ENCODE measurements at regions of chr17 and their contacts with region 1.

Region 1: GRCh38 chr17:17681187-17681848 is at the start of gene RAI1:
- DNase-seq: peak; percentile 81 to 85 (median 83)
- H3K4me3 ChIP-seq: peak within 1 kb of the TSS; percentile 36 to 88 (median 48)
- H3K27ac ChIP-seq: peak within 1 kb of the TSS; percentile 88 to 97 (median 92)
- H3K4me1 ChIP-seq: peaks cover 21 to 36% of the 10 kb centered on the region in 2 donors
- H3K27me3 ChIP-seq: no peaks in the 10 kb centered on the region
- CTCF ChIP-seq: peak in 3 of 6 experiments; percentile 80 to 98 (median 96)
- POLR2A ChIP-seq: peak; percentile 61 to 71
- total RNA-seq, gene RAI1: 6.9 to 37.3 (median 27.1) TPM

Region 2: GRCh38 chr17:17766077-17766743 is 84.9 kb after region 1 on chr17:
- intact Hi-C with region 1: loop called in 1 of 2 experiments (anchors 10 kb)
- DNase-seq: peak in 1 of 7 donors; percentile 71
- H3K4me3 ChIP-seq: no peak overlapping the region
- H3K27ac ChIP-seq: peak overlapping the region in 2 of 5 donors; percentile 56 to 59
- H3K4me1 ChIP-seq: peaks cover 11 to 64% of the 10 kb centered on the region in 2 donors
- H3K27me3 ChIP-seq: no peaks in the 10 kb centered on the region
- CTCF ChIP-seq: no peak
- POLR2A ChIP-seq: no peak

Region 3: GRCh38 chr17:17812211-17813057 is 131.1 kb after region 1 on chr17:
- intact Hi-C with region 1: loop called in 1 of 2 experiments (anchors 5 kb)
- DNase-seq: peak; percentile 67 to 91 (median 81)
- H3K4me3 ChIP-seq: no peak overlapping the region
- H3K27ac ChIP-seq: peak overlapping the region in 4 of 5 donors; percentile 20 to 94 (median 72)
- H3K4me1 ChIP-seq: peaks cover 13 to 76% of the 10 kb centered on the region in 2 donors
- H3K27me3 ChIP-seq: no peaks in the 10 kb centered on the region
- CTCF ChIP-seq: peak; percentile 97 to 99 (median 98)
- POLR2A ChIP-seq: peak in 1 of 2 donors; percentile 18

Region 4: DNA sequence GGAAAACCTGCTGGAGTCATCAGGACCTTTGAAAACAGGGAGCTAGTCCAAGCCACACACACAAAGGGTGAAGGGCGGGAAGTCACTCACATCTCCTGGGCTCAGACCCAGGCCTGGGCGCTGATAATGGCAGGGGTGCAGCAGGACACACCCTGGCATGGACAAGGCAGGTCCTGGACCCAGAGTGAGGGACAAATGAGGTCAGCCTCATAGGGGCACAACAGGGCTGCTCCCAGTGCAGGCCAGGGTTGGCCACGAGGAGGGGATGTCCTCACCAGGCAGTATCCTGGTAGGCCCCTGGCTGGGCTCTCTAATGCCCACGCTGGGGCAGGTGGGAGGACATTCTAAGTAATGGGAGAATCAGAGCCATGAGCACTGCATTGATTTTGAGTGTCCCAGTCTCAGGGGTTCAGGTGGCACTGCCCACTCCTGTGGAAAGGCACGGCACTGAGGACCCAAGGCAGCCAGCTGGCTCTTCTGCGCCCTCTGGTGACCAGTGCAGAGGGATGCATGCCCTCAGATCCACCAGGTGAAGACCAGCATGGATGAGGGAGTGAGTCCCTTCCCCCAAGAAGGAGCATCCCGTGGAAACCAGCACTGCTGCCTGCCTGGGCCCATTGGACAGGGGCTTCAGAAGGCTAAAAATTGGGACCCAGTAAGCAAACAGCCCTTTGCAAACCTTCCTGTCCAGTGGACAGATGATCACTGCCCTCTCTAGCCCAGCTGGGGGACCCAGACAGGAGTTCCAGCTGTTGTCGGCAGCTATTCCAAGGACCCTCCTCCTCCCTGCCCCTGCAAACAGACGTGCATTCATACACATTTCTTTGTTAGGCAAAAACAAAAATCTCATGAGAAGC is 178.8 kb after region 1 on chr17:
- intact Hi-C with region 1: loop called (anchors 5 kb)
- DNase-seq: peak; percentile 58 to 86 (median 74)
- H3K4me3 ChIP-seq: no peak overlapping the region
- H3K27ac ChIP-seq: peak overlapping the region in 1 of 5 donors; percentile 13
- H3K4me1 ChIP-seq: peaks cover 17 to 35% of the 10 kb centered on the region in 2 donors
- H3K27me3 ChIP-seq: no peaks in the 10 kb centered on the region
- CTCF ChIP-seq: peak; percentile 93 to 98 (median 97)
- POLR2A ChIP-seq: no peak

Region 5: GRCh38 chr17:17868641-17869522 is 187.6 kb after region 1 on chr17:
- intact Hi-C with region 1: loop called (anchors 5 kb)
- DNase-seq: peak in 1 of 7 donors; percentile 79
- H3K4me3 ChIP-seq: no peak overlapping the region
- H3K27ac ChIP-seq: peak overlapping the region in 3 of 5 donors; percentile 32 to 77 (median 46)
- H3K4me1 ChIP-seq: peaks cover 9 to 36% of the 10 kb centered on the region in 2 donors
- H3K27me3 ChIP-seq: no peaks in the 10 kb centered on the region
- CTCF ChIP-seq: no peak
- POLR2A ChIP-seq: no peak

Region 6: DNA sequence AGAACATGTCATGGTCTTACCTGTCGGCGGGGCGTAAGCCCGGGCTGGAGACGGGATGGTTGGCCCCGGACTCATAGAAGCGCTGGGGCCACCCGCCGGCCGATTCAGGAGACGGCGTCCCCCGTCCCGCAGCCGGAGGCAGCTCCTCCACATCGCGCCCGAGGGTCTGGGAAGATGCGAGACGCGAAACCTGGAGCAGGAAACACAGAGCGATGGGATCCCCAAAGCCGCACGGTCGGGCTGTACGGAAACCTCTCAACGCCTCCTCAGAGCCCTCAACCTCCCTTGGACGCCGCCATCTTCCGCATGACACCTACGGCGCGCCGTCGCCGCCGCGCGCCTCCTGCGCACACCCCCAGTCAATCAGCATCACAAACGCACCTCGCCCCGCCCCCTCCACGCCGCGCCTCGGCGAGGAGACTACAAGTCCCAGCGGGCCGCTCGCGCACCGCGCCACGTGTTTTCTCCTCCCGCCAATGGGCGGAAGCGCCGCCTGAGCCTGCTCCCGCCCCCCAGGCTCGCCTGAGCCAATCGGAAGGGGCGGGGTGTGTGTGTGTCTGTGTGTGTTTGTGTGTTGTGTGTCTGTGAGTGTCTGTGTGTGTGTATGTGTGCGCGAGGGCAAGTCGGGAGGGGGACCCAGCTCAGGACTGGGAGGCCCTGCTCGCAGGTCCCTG is 357.7 kb after region 1 on chr17 and contains the starts of genes ATPAF2 and GID4:
- intact Hi-C with region 1: loop called (anchors 5 to 10 kb)
- DNase-seq: peak; percentile 99 to 100 (median 100)
- H3K4me3 ChIP-seq: peak within 1 kb of the TSS; percentile 43 to 98 (median 56)
- H3K27ac ChIP-seq: peak within 1 kb of the TSS in 3 of 5 donors; percentile 55 to 82 (median 72)
- H3K4me1 ChIP-seq: peaks cover 27 to 52% of the 10 kb centered on the region in 2 donors
- H3K27me3 ChIP-seq: no peaks in the 10 kb centered on the region
- CTCF ChIP-seq: no peak
- POLR2A ChIP-seq: peak in 1 of 2 donors; percentile 61
- total RNA-seq, gene ATPAF2: 32.5 to 68.6 (median 39.5) TPM
- total RNA-seq, gene GID4: 6.3 to 16.7 (median 11.1) TPM

Measured in adrenal gland (tissue), 19 donors.